Activated T-helper 1 cell treated with anti-CD3 and anti-CD28 coated beads, Interleukin-12 subunit alpha, Interleukin-12 subunit beta, Interleukin-2, Interleukin-4 antibody, amounts not matched to agents 30 ng/mL and 10 ng/mL and 1 ng/mL, durations not matched to agents 14 hours and 24 hours and 36 hours (primary cell): ENCODE measurements at regions of chr11 and their contacts with region 1.

Region 1: GRCh38 chr11:67507864-67508485 is at the start of gene CDK2AP2:
- DNase-seq: peak; percentile 97
- H3K4me3 Mint-ChIP-seq: peak within 1 kb of the TSS; percentile 92
- H3K27ac Mint-ChIP-seq: peak within 1 kb of the TSS; percentile 93
- H3K4me1 Mint-ChIP-seq: peaks cover 36% of the 10 kb centered on the region
- H3K27me3 Mint-ChIP-seq: no peaks in the 10 kb centered on the region
- total RNA-seq, gene CDK2AP2: 107 and 115 TPM in 2 replicates

Region 2: GRCh38 chr11:67239783-67240575 is 268.0 kb before region 1 on chr11:
- intact Hi-C with region 1: loop called (anchors 2 kb)
- DNase-seq: peak; percentile 96
- H3K4me3 Mint-ChIP-seq: peak overlapping the region; percentile 100
- H3K27ac Mint-ChIP-seq: peak overlapping the region; percentile 100
- H3K4me1 Mint-ChIP-seq: peaks cover 58% of the 10 kb centered on the region
- H3K27me3 Mint-ChIP-seq: no peaks in the 10 kb centered on the region

Region 3: DNA sequence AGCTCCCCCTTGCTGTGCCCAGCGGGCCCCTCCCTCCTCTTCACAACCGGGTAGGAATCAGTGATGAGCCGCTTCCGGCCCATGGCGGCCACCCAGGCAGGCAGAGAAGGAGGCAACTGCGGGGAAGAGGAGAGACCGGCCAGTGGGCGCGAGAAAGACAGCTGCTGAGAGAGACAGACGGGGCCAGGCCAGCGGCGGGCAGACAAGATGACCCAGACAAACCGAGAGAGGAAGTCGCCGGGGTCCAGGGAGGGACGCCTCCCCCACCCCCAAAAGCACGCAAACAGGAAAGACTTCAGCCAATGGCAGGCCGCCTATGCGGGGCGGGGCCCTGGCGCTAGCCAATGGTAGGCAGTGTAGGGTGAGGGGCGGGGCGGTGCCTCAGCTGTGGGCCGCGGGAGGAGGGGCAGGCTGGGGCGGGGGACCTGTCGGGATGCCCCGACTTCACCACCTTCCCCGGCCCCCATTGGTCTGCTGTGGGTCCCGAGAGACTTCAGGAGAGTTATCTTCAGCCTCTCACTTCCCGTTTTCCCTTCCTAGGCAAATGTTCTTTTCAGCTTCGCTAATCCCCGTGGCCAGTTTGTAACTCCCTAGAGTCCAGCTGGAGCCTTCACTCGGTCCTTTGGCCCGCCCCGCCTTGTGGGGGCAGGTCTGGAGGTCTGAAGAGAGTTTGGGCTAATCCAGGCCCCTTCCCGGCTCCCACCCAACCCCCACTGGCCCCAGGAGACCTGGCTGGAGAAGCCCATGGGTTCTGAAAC is 154.5 kb before region 1 on chr11 and contains the start of gene POLD4:
- intact Hi-C with region 1: loop called (anchors 1 kb)
- DNase-seq: peak; percentile 95
- H3K4me3 Mint-ChIP-seq: peak within 1 kb of the TSS; percentile 94
- H3K27ac Mint-ChIP-seq: peak within 1 kb of the TSS; percentile 98
- H3K4me1 Mint-ChIP-seq: peaks cover 34% of the 10 kb centered on the region
- H3K27me3 Mint-ChIP-seq: peaks cover 1% of the 10 kb centered on the region
- total RNA-seq, gene POLD4: 36.7 and 39.8 TPM in 2 replicates

Region 4: GRCh38 chr11:67409261-67409666 is 98.7 kb before region 1 on chr11:
- intact Hi-C with region 1: loop called (anchors 1 kb)
- DNase-seq: peak; percentile 78
- H3K4me3 Mint-ChIP-seq: peak overlapping the region; percentile 88
- H3K27ac Mint-ChIP-seq: peak overlapping the region; percentile 94
- H3K4me1 Mint-ChIP-seq: peaks cover 75% of the 10 kb centered on the region
- H3K27me3 Mint-ChIP-seq: peaks cover 2% of the 10 kb centered on the region

Region 5: GRCh38 chr11:67468835-67469811 is 38.9 kb before region 1 on chr11 and contains the start of gene TMEM134:
- intact Hi-C with region 1: loop called (anchors 1 kb)
- DNase-seq: peak; percentile 88
- H3K4me3 Mint-ChIP-seq: peak within 1 kb of the TSS; percentile 91
- H3K27ac Mint-ChIP-seq: peak within 1 kb of the TSS; percentile 84
- H3K4me1 Mint-ChIP-seq: peaks cover 21% of the 10 kb centered on the region
- H3K27me3 Mint-ChIP-seq: no peaks in the 10 kb centered on the region
- total RNA-seq, gene TMEM134: 55.1 and 61.4 TPM in 2 replicates

Region 6: GRCh38 chr11:67630228-67630942 is 122.4 kb after region 1 on chr11:
- intact Hi-C with region 1: loop called (anchors 1 kb)
- DNase-seq: peak; percentile 94
- H3K4me3 Mint-ChIP-seq: peak overlapping the region; percentile 84
- H3K27ac Mint-ChIP-seq: peak overlapping the region; percentile 92
- H3K4me1 Mint-ChIP-seq: peaks cover 7% of the 10 kb centered on the region
- H3K27me3 Mint-ChIP-seq: peaks cover 3% of the 10 kb centered on the region